Right cardiac atrium (tissue), 5 donors: ENCODE measurements at regions of chr11 and their contacts with region 1.

Region 1: GRCh38 chr11:43825217-43825816 is 55.3 kb upstream of the ALKBH3 start:
- DNase-seq: no peak
- ATAC-seq: no peak
- H3K4me3 ChIP-seq: no peak overlapping the region
- H3K27ac ChIP-seq: no peak overlapping the region
- H3K4me1 ChIP-seq: no peaks in the 10 kb centered on the region
- H3K27me3 ChIP-seq: no peaks in the 10 kb centered on the region

Region 2: DNA sequence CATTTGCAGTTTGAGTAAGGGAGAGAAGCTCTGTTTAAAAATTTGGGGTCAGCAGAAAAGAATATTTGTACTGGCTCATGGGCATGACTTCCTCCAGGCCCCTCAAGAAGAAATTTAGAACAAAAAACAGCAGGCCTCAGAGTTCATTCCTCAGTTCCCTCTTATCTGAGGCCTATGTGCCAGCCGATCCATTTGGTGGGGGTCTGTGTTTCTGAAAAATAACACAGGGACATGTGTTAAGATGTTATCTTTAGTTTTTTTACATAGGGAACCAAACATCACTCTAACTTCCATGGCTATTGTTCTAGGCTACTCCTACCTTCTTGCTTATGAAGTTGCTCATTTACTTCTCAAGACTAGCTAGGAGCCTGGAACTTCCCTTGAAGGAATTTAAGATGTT is 161.0 kb before region 1 on chr11:
- intact Hi-C with region 1: loop called in 1 of 4 experiments (anchors 10 kb)
- DNase-seq: no peak
- ATAC-seq: no peak
- H3K4me3 ChIP-seq: no peak overlapping the region
- H3K27ac ChIP-seq: no peak overlapping the region
- H3K4me1 ChIP-seq: no peaks in the 10 kb centered on the region
- H3K27me3 ChIP-seq: no peaks in the 10 kb centered on the region